ENCODE measurements at regions of chr2 and their contacts with region 1.

Region 1: DNA sequence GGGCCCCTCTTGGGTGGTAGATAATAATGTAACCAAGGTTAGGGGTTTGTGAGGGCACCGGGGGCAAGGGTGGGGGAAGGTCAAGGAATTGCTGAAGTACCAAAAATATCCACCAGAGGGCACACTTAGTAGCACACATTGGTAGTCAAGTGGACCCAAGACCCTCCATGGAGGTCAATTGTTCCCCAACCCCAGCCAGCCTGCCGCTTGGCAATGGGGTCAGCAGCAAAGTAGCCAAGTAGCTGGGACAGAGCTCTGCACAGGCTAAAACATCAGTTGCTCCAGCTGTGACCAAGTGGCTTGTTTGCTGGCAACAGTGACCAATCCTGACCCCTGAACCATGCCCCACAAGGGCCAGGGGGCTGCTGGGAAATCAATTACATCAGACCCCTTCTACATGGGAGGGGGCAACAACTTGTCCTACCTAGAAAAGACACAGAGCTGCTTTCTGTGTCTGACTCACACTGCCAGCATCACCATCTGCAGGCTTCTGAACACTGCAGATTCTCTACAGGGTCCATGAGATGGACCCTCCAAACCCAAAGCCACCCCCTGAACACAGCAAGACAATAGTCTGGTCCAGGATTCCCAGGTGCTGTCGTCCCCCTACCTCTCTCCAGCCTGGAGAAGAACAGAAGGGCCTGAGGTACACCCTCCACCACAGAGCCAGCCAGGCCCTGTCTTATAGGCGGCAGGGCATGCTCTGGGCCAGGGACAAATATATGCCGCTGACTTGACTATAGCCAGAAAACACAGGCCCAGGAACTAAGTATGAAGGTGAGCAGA is 76.0 kb downstream of the EMX1 start:
- DNase-seq: peak; percentile 72
- H3K4me3 ChIP-seq: no peak overlapping the region
- H3K27ac ChIP-seq: no peak overlapping the region
- H3K4me1 ChIP-seq: peaks cover 0 to 7% (median 0%) of the 10 kb centered on the region in 6 donors
- H3K27me3 ChIP-seq: no peaks in the 10 kb centered on the region
- CTCF ChIP-seq: peak; percentile 52 to 92 (median 82)
- POLR2A ChIP-seq: no peak

Region 2: GRCh38 chr2:73156539-73157124 is 163.3 kb after region 1 on chr2:
- intact Hi-C with region 1: loop called (anchors 5 kb)
- DNase-seq: no peak
- H3K4me3 ChIP-seq: peak overlapping the region in 1 of 8 donors; percentile 15
- H3K27ac ChIP-seq: no peak overlapping the region
- H3K4me1 ChIP-seq: peaks cover 0 to 9% (median 6%) of the 10 kb centered on the region in 6 donors
- H3K27me3 ChIP-seq: peaks cover 0 to 43% (median 10%) of the 10 kb centered on the region in 7 donors
- CTCF ChIP-seq: peak; percentile 7 to 74 (median 64)
- POLR2A ChIP-seq: no peak

Region 3: DNA sequence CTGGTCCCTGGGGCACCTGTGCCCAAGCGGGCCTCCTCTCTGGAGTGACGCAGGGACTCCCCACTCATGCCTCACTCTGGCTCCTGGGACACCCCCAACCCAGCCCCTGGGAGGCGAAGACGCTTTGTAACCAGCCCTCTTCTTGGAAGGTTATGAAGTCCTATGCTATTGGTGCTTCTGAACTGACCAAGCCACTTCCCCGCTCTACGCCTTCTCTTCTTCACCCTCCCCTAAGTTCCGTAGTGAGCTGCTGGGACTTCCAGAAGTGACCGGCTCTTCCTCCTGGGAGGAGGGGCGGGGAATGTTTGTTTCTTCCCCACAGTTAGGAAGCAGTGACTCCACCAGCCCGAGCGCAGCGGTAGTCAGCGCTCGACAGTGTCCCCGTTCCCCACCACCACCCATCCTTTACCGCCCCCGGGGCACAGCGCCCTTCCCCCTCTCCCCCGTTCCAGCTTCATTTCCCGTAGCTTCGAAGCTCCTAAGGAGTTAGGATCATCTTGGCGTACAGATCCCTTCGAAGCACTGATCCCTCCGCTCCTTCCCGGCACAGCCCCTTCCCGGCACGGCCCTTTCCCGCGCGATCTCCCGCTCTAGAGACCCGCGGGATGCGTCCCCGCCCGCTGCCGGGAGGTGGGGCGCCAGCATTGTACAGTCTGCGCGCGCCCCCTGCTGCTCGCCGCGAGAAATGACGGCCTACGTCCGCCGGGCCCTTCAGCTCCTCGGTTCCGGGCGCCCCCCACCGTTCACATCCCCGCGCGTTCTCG is 183.7 kb after region 1 on chr2:
- intact Hi-C with region 1: loop called (anchors 5 kb)
- DNase-seq: peak; percentile 97
- H3K4me3 ChIP-seq: peak overlapping the region; percentile 42 to 70 (median 56)
- H3K27ac ChIP-seq: peak overlapping the region in 6 of 8 donors; percentile 27 to 64 (median 35)
- H3K4me1 ChIP-seq: peaks cover 18 to 33% (median 29%) of the 10 kb centered on the region in 6 donors
- H3K27me3 ChIP-seq: peaks cover 0 to 79% (median 24%) of the 10 kb centered on the region in 7 donors
- CTCF ChIP-seq: peak; percentile 91 to 99 (median 98)
- POLR2A ChIP-seq: no peak